Calu3 (cell line): ENCODE measurements at regions of chr2 and their contacts with region 1.

Region 1: GRCh38 chr2:11344342-11344955 is at the start of gene ROCK2:
- DNase-seq: peak; percentile 87
- H3K4me3 Mint-ChIP-seq: peak within 1 kb of the TSS; percentile 82
- H3K27ac Mint-ChIP-seq: peak within 1 kb of the TSS; percentile 67
- H3K4me1 Mint-ChIP-seq: peaks cover 10% of the 10 kb centered on the region
- H3K27me3 Mint-ChIP-seq: peaks cover 15% of the 10 kb centered on the region
- CTCF ChIP-seq: no peak
- total RNA-seq, gene ROCK2: 30.8 and 35.3 TPM in 2 replicates

Region 2: DNA sequence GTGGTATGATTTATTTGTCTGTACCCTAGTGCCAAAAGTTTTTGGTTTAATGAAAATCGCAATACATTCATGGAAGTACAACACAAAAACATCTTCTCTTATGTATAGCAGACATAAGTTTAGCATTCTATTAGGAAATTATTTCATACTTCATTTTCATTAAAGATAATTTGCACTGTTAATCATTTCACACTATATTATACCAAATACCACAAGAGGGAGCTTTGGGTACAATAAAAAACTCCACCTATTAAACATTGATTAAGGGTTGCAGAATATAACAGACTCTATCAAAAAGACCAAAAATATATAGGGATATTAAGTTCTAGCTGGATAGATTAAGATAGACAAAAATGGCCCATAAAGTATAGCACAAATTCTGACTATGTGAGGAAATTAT is 110.1 kb before region 1 on chr2:
- CTCF ChIA-PET with region 1: interaction called, 4 read pairs
- intact Hi-C with region 1: loop called (anchors 5 kb)
- DNase-seq: no peak
- H3K4me3 Mint-ChIP-seq: no peak overlapping the region
- H3K27ac Mint-ChIP-seq: no peak overlapping the region
- H3K4me1 Mint-ChIP-seq: no peaks in the 10 kb centered on the region
- H3K27me3 Mint-ChIP-seq: no peaks in the 10 kb centered on the region
- CTCF ChIP-seq: no peak

Region 3: GRCh38 chr2:11389551-11390528 is 45.4 kb after region 1 on chr2:
- CTCF ChIA-PET with region 1: interaction called, 3 read pairs
- intact Hi-C with region 1: loop called (anchors 5 kb)
- DNase-seq: peak; percentile 87
- H3K4me3 Mint-ChIP-seq: peak overlapping the region; percentile 18
- H3K27ac Mint-ChIP-seq: peak overlapping the region; percentile 59
- H3K4me1 Mint-ChIP-seq: peaks cover 61% of the 10 kb centered on the region
- H3K27me3 Mint-ChIP-seq: no peaks in the 10 kb centered on the region
- CTCF ChIP-seq: no peak